ENCODE measurements at regions of chr9 and their contacts with region 1.

Region 1: DNA sequence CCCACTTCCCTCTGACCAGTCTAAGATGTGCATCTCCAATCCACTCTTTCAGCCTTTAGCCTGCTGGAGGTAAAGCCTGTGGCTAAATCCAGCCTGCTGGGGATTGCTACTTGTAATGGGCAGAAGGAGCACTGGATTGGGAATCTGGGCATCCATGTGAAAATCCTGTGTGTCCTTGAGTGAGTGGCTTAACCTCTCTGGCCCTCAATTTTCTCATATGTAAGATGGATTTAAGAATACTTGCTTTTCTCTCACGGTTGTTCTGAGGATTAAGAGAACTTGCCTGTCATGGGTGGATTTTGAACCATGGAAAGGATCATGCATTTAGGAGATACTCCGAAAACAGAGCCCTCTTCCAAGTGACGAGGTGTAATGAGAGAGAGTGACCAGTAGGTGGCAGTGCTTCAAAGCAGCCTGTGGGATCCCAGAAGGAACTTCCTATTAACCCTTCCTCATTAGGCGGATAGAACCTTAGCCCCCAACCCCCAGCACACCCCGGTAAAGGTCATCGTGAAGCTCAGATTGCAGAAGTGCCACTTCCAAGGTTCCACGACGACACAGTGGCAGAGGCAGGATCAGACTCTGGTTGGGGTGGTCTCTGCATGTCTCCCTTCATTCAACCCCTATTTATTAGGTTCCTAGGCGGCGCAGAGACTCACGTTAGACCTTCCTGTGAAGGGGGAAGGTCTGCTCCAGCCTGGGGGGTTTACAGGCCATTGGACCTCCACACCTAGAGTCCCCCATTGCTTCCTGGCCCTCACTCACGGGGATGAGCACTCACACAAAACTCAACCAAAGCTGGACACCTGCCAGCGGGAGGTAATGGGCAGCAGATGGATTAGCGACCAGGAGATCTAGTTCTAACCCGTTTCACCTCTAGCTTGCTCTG is 68.7 kb upstream of the ZNF618 start:
- DNase-seq: peak in 6 of 10 donors; percentile 25 to 59 (median 42)
- H3K4me3 ChIP-seq: peak overlapping the region in 20 of 59 donors; percentile 5 to 40 (median 26)
- H3K27ac ChIP-seq: no peak overlapping the region
- H3K27me3 ChIP-seq: peaks cover 0 to 16% (median 0%) of the 10 kb centered on the region in 45 donors
- CTCF ChIP-seq: peak; percentile 68 to 96 (median 90)

Region 2: GRCh38 chr9:113876151-113876992 is 69.0 kb after region 1 on chr9 and contains the start of gene ZNF618:
- intact Hi-C with region 1: loop called in 1 of 2 experiments (anchors 2 kb)
- DNase-seq: peak in 4 of 10 donors; percentile 25 to 54 (median 47)
- H3K4me3 ChIP-seq: peak within 1 kb of the TSS; percentile 66 to 92 (median 83)
- H3K27ac ChIP-seq: peak within 1 kb of the TSS in 34 of 59 donors; percentile 12 to 86 (median 68)
- H3K27me3 ChIP-seq: no peaks in the 10 kb centered on the region
- CTCF ChIP-seq: peak in 54 of 56 donors; percentile 5 to 78 (median 59)
- total RNA-seq, gene ZNF618: 3.2 to 10.5 (median 6.8) TPM